Right ventricle myocardium inferior (tissue), 1 donor: ENCODE measurements at regions of chr11 and their contacts with region 1.

Region 1: DNA sequence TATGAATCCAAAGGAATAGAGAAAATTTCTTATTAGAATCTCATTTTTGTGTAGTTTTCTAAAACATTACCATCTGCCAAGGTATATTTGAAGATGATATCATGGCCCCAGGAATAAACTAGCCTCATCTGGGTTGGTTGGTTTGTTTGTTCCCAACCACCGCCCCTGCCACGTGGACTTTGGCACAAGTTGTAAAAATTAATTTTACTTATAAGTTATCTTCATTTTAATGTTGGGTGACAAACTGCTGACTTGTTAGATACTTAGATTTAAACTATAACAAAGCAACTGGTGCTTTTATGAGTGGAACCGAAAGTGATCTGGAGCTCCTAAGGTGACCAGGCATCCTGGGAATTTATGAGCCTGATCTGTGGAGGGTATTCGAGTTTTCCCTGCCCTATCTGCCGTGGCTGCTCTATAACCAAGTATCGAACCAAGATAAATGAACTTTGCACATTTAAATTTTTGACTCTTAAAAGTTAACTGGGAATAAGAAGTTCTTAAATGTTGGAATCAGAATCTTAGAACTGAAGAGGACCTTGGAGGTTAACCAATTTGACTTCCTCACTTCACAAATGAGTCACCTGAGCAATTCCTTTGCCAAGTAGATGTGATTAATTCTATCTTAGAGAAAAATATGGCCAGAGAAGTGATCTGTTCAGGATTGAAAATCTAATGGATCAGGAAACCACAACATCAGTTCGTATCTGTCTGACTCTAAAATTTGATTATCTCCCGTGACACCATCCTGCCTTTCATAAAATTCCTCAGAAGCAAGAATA is 129.1 kb upstream of the ARHGAP42 start:
- DNase-seq: no peak
- ATAC-seq: no peak

Region 2: GRCh38 chr11:100445231-100445735 is 112.7 kb before region 1 on chr11:
- intact Hi-C with region 1: loop called (anchors 10 kb)
- DNase-seq: no peak
- ATAC-seq: peak; percentile 90